ENCODE measurements at regions of chr20 and their contacts with region 1.

Region 1: GRCh38 chr20:34312544-34313217 is 9.5 kb upstream of the AHCY start:
- DNase-seq: peak; percentile 87
- H3K4me3 ChIP-seq: peak overlapping the region in 1 of 3 experiments; percentile 11
- H3K27ac ChIP-seq: no peak overlapping the region
- H3K4me1 ChIP-seq: peaks cover 9% of the 10 kb centered on the region
- H3K27me3 ChIP-seq: no peaks in the 10 kb centered on the region
- CTCF ChIP-seq: peak; percentile 100
- POLR2A ChIP-seq: no peak

Region 2: DNA sequence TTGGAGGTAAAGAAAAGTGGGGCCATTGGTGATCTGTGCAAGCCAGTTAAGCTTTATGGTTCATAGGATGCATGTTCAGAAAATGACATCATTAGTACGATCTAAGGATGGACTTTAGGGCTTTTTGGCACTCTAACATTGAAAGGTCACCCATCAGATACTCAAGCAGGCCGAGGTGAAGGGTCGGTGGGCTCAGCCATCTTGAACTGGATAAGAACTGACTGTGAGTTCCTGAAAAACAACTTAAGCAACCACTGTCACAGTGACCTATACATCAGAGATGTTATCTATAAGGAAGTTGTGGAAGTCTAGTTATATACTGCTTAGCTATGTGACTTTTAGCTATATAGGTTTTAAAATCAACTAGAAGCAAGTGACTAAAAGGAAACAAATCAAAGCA is 37.4 kb after region 1 on chr20:
- CTCF ChIA-PET with region 1: interaction called, 11 read pairs
- POLR2A ChIA-PET with region 1: no interaction called
- dilution Hi-C with region 1: no loop called
- intact Hi-C with region 1: no loop called
- DNase-seq: no peak
- H3K4me3 ChIP-seq: no peak overlapping the region
- H3K27ac ChIP-seq: no peak overlapping the region
- H3K4me1 ChIP-seq: peaks cover 4% of the 10 kb centered on the region
- H3K27me3 ChIP-seq: no peaks in the 10 kb centered on the region
- CTCF ChIP-seq: no peak
- POLR2A ChIP-seq: no peak

Region 3: DNA sequence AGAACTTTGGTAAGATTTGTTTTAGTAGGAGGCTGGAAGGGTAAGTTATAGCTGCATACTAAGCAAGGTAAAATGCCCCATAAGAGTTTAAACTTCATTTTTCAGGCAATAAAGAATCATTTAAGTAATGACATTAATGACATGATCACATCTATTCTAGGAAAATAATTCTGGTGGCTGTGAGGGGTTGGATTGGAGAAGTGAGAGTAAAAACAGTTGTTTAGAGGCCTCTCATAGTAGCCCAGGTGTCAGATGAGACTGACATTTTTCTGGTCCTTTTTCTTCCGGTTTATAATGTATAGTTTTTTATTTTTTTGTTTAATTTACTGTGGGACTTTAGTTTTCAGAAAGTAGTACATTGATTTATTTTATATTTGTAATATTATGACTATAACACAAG is 91.2 kb after region 1 on chr20:
- CTCF ChIA-PET with region 1: interaction called, 19 read pairs
- POLR2A ChIA-PET with region 1: no interaction called
- dilution Hi-C with region 1: no loop called
- intact Hi-C with region 1: no loop called
- DNase-seq: no peak
- H3K4me3 ChIP-seq: no peak overlapping the region
- H3K27ac ChIP-seq: no peak overlapping the region
- H3K4me1 ChIP-seq: peaks cover 11% of the 10 kb centered on the region
- H3K27me3 ChIP-seq: no peaks in the 10 kb centered on the region
- CTCF ChIP-seq: no peak
- POLR2A ChIP-seq: no peak

Region 4: GRCh38 chr20:34437330-34437986 is 124.8 kb after region 1 on chr20:
- CTCF ChIA-PET with region 1: interaction called, 42 read pairs
- POLR2A ChIA-PET with region 1: interaction called, 3 read pairs
- dilution Hi-C with region 1: no loop called
- intact Hi-C with region 1: no loop called
- DNase-seq: peak; percentile 52
- H3K4me3 ChIP-seq: no peak overlapping the region
- H3K27ac ChIP-seq: peak overlapping the region; percentile 24
- H3K4me1 ChIP-seq: peaks cover 15% of the 10 kb centered on the region
- H3K27me3 ChIP-seq: no peaks in the 10 kb centered on the region
- CTCF ChIP-seq: no peak
- POLR2A ChIP-seq: no peak

Region 5: GRCh38 chr20:34491226-34491931 is 178.7 kb after region 1 on chr20:
- CTCF ChIA-PET with region 1: interaction called, 12 read pairs
- POLR2A ChIA-PET with region 1: no interaction called
- dilution Hi-C with region 1: no loop called
- intact Hi-C with region 1: no loop called
- DNase-seq: no peak
- H3K4me3 ChIP-seq: no peak overlapping the region
- H3K27ac ChIP-seq: no peak overlapping the region
- H3K4me1 ChIP-seq: no peaks in the 10 kb centered on the region
- H3K27me3 ChIP-seq: no peaks in the 10 kb centered on the region
- CTCF ChIP-seq: no peak
- POLR2A ChIP-seq: no peak

Region 6: GRCh38 chr20:34538671-34539123 is 226.0 kb after region 1 on chr20:
- CTCF ChIA-PET with region 1: interaction called, 30 read pairs
- POLR2A ChIA-PET with region 1: no interaction called
- dilution Hi-C with region 1: no loop called
- intact Hi-C with region 1: no loop called
- DNase-seq: peak; percentile 45
- H3K4me3 ChIP-seq: no peak overlapping the region
- H3K27ac ChIP-seq: no peak overlapping the region
- H3K4me1 ChIP-seq: no peaks in the 10 kb centered on the region
- H3K27me3 ChIP-seq: no peaks in the 10 kb centered on the region
- CTCF ChIP-seq: peak; percentile 75 to 87
- POLR2A ChIP-seq: no peak